B cell (primary cell): ENCODE measurements at regions of chr12 and their contacts with region 1.

Region 1: GRCh38 chr12:51531978-51532497 is 59.0 kb upstream of the SCN8A start:
- DNase-seq: peak; percentile 84
- ATAC-seq: peak; percentile 98
- H3K4me3 ChIP-seq: no peak overlapping the region
- H3K4me3 Mint-ChIP-seq: no peak overlapping the region
- H3K27ac ChIP-seq: no peak overlapping the region
- H3K27ac Mint-ChIP-seq: no peak overlapping the region
- H3K4me1 ChIP-seq: peaks cover 7 to 8% of the 10 kb centered on the region in 2 donors
- H3K4me1 Mint-ChIP-seq: peaks cover 9% of the 10 kb centered on the region
- H3K27me3 ChIP-seq: peaks cover 0 to 13% (median 0%) of the 10 kb centered on the region in 4 experiments
- H3K27me3 Mint-ChIP-seq: peaks cover 30% of the 10 kb centered on the region
- CTCF ChIP-seq: peak; percentile 92

Region 2: DNA sequence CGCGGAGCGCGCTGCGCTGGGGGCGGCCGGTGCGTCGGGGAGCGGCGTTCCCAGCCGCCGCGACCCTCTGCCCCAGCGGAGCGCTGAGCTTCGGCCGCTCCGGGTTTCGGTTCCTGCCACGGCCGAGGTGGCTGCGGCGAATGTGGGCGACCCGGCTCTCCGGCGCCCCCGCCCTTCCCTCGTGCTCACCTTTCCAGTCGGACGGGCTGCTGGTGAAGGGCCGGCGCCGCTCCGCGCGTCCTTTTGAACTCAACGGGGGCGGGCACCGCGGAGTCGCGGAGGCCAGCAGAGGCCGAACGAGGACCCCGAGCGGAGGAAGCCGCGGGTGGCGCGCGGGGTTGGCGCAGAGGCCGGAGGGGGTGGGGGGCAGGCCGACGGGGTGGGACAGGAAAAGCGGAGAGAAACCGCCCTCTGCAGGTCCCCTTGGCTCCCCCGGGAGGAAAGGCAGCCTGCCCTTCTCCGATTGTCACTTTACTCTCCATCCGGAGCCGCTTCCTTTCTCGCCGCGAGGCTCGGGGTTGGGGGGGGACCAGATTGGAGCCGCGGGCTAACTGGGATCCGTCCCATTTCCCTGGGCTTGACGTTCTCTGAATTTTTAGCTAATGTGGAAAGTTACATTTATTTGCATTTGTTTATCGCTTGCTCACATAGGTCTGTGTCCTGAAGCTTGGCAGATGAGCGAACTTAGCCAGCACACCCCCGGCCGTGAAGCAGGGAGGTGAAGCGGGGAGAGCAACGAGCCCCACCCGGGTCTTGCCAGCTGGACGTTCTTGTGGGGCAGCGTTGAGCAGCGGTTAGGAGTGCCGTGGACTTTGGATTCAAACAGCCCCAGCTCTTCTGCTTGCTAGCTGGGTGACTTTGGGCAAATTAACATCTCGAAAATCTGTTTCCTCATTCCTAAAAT is 261.7 kb before region 1 on chr12 and contains the start of gene SMAGP:
- CTCF ChIA-PET with region 1: interaction called, 13 read pairs
- POLR2A ChIA-PET with region 1: no interaction called
- intact Hi-C with region 1: loop called (anchors 2 kb)
- DNase-seq: peak; percentile 79
- ATAC-seq: peak; percentile 75
- H3K4me3 ChIP-seq: peak within 1 kb of the TSS; percentile 52 to 86 (median 74)
- H3K4me3 Mint-ChIP-seq: peak within 1 kb of the TSS; percentile 95
- H3K27ac ChIP-seq: peak within 1 kb of the TSS; percentile 12 to 64
- H3K27ac Mint-ChIP-seq: peak within 1 kb of the TSS; percentile 91
- H3K4me1 ChIP-seq: peaks cover 19 to 20% of the 10 kb centered on the region in 2 donors
- H3K4me1 Mint-ChIP-seq: peaks cover 31% of the 10 kb centered on the region
- H3K27me3 ChIP-seq: no peaks in the 10 kb centered on the region
- H3K27me3 Mint-ChIP-seq: no peaks in the 10 kb centered on the region
- CTCF ChIP-seq: no peak
- total RNA-seq, gene SMAGP: 8.0 and 10.4 TPM in 2 replicates

Region 3: GRCh38 chr12:51391283-51392162 is 140.5 kb before region 1 on chr12 and contains the start of gene GALNT6:
- CTCF ChIA-PET with region 1: no interaction called
- POLR2A ChIA-PET with region 1: no interaction called
- intact Hi-C with region 1: loop called (anchors 10 kb)
- DNase-seq: peak; percentile 88
- ATAC-seq: peak; percentile 79
- H3K4me3 ChIP-seq: peak within 1 kb of the TSS; percentile 55 to 87 (median 83)
- H3K4me3 Mint-ChIP-seq: peak within 1 kb of the TSS; percentile 90
- H3K27ac ChIP-seq: peak within 1 kb of the TSS; percentile 68 to 87
- H3K27ac Mint-ChIP-seq: peak within 1 kb of the TSS; percentile 88
- H3K4me1 ChIP-seq: peaks cover 68 to 79% of the 10 kb centered on the region in 2 donors
- H3K4me1 Mint-ChIP-seq: peaks cover 74% of the 10 kb centered on the region
- H3K27me3 ChIP-seq: no peaks in the 10 kb centered on the region
- H3K27me3 Mint-ChIP-seq: no peaks in the 10 kb centered on the region
- CTCF ChIP-seq: no peak
- total RNA-seq, gene GALNT6: 8.5 and 9.0 TPM in 2 replicates

Region 4: GRCh38 chr12:51521554-51522276 is 10.3 kb before region 1 on chr12:
- CTCF ChIA-PET with region 1: interaction called, 26 read pairs
- POLR2A ChIA-PET with region 1: no interaction called
- intact Hi-C with region 1: no loop called
- DNase-seq: no peak
- ATAC-seq: no peak
- H3K4me3 ChIP-seq: no peak overlapping the region
- H3K4me3 Mint-ChIP-seq: no peak overlapping the region
- H3K27ac ChIP-seq: no peak overlapping the region
- H3K27ac Mint-ChIP-seq: no peak overlapping the region
- H3K4me1 ChIP-seq: no peaks in the 10 kb centered on the region
- H3K4me1 Mint-ChIP-seq: no peaks in the 10 kb centered on the region
- H3K27me3 ChIP-seq: no peaks in the 10 kb centered on the region
- H3K27me3 Mint-ChIP-seq: no peaks in the 10 kb centered on the region
- CTCF ChIP-seq: no peak

Region 5: GRCh38 chr12:51549637-51550036 is 17.6 kb after region 1 on chr12:
- CTCF ChIA-PET with region 1: no interaction called
- POLR2A ChIA-PET with region 1: no interaction called
- intact Hi-C with region 1: no loop called
- DNase-seq: no peak
- ATAC-seq: no peak
- H3K4me3 ChIP-seq: no peak overlapping the region
- H3K4me3 Mint-ChIP-seq: no peak overlapping the region
- H3K27ac ChIP-seq: no peak overlapping the region
- H3K27ac Mint-ChIP-seq: no peak overlapping the region
- H3K4me1 ChIP-seq: no peaks in the 10 kb centered on the region
- H3K4me1 Mint-ChIP-seq: peaks cover 8% of the 10 kb centered on the region
- H3K27me3 ChIP-seq: peaks cover 0 to 13% (median 2%) of the 10 kb centered on the region in 4 experiments
- H3K27me3 Mint-ChIP-seq: peaks cover 38% of the 10 kb centered on the region
- CTCF ChIP-seq: no peak

Region 6: DNA sequence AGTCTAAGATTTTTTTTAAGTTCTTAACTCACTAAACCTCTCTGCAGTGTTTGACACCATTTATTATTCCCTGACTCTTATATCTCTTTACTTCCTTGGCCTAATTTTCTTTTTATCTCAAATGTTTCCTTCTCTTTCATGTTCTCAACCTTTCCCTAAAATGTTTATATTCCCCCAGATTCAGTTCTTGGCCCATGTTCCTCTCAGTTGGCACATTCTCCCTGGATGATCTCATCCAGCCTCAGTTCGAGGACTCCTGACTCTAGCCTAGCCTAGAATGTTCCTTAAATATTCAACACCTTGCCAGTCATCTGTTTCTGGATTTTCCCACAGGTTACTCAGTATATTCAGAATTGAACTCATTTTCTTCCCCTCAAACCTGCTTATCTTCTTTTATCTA is 140.3 kb after region 1 on chr12:
- CTCF ChIA-PET with region 1: no interaction called
- POLR2A ChIA-PET with region 1: no interaction called
- intact Hi-C with region 1: no loop called
- DNase-seq: no peak
- ATAC-seq: no peak
- H3K4me3 ChIP-seq: no peak overlapping the region
- H3K4me3 Mint-ChIP-seq: no peak overlapping the region
- H3K27ac ChIP-seq: no peak overlapping the region
- H3K27ac Mint-ChIP-seq: no peak overlapping the region
- H3K4me1 ChIP-seq: no peaks in the 10 kb centered on the region
- H3K4me1 Mint-ChIP-seq: no peaks in the 10 kb centered on the region
- H3K27me3 ChIP-seq: no peaks in the 10 kb centered on the region
- H3K27me3 Mint-ChIP-seq: peaks cover 20% of the 10 kb centered on the region
- CTCF ChIP-seq: no peak